Activated CD4-positive, alpha-beta T cell treated with anti-CD3 and anti-CD28 coated beads, Interleukin-2, amount 10 ng/mL, durations not matched to agents 24 days and 14 days (primary cell): ENCODE measurements at regions of chr1 and their contacts with region 1.

Region 1: DNA sequence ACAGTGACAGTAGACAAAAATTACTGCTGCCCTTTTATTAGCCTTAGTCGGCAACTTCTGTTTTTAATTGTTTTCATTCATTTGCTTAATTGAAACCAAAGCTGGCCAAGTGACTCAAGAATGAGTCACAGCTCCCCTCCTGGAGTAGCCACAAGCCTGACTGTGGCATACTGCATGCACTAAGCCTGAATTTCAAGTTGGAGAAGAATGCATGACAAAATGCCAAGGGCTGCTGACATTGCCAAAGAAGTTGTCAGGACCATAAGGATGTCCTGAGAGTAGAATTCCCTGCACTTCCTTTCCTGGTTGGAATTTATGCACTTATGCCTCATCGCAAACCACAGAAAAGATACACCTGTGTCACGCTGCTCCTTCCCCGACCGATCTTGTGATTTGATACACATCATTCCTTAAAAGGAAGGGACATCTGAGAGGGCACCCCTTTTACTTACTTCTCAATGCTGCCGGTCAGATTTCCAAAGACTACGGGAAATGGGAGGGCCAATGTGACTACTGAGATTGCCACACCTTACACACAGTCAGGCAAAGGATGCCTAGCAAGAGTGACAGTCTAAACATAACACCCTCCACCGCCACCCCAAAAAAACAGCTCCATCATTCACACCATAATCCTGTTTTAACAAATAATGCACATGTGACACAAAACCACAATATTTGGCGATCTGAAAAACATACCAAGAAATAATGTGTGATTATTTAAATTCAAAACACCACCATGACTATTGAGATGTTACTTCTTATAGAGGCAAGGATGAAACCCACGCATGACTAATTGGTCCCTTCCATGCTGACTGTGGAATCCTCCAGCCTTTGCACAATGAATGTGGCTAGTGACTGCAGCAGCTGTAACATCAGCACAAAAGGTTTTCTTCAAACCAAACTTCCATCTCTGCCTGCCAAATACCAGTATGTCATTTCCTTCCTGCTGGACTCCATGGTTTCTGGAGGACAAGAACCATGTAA is 28.2 kb downstream of the VAV3 start:
- DNase-seq: peak; percentile 68
- H3K4me3 Mint-ChIP-seq: peak overlapping the region; percentile 53
- H3K27ac Mint-ChIP-seq: peak overlapping the region; percentile 87
- H3K4me1 Mint-ChIP-seq: peaks cover 41% of the 10 kb centered on the region
- H3K27me3 Mint-ChIP-seq: no peaks in the 10 kb centered on the region

Region 2: DNA sequence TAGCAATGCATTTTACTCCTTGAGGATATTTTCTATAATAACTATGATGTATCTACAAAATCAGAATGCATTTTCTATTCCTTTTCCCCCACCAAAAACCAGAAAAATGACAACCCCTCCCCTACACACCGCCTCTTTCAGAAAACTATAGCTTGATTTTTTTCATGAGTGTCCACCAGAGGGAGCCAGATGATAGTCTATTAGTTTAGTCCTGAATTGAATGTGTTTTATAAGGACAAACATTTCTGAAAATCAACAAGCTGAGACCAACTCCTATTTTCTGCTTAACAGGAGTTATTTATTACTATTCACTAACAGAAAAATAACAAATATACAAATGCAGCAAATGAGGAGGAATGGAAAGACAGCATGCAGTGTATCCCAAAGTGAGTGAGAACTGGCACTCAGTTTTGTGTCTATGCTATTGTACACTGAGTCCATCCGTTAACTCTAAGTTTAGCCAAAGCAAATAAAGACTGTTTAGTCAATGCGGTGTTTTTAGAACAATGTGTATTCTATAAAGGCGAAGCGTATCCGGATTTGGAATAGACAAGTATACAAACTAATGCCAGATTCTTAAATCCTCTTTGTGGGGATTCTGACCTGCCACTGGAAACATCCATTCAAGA is 154.5 kb before region 1 on chr1:
- intact Hi-C with region 1: loop called (anchors 1 kb)
- DNase-seq: peak; percentile 86
- H3K4me3 Mint-ChIP-seq: no peak overlapping the region
- H3K27ac Mint-ChIP-seq: no peak overlapping the region
- H3K4me1 Mint-ChIP-seq: peaks cover 22% of the 10 kb centered on the region
- H3K27me3 Mint-ChIP-seq: no peaks in the 10 kb centered on the region

Region 3: DNA sequence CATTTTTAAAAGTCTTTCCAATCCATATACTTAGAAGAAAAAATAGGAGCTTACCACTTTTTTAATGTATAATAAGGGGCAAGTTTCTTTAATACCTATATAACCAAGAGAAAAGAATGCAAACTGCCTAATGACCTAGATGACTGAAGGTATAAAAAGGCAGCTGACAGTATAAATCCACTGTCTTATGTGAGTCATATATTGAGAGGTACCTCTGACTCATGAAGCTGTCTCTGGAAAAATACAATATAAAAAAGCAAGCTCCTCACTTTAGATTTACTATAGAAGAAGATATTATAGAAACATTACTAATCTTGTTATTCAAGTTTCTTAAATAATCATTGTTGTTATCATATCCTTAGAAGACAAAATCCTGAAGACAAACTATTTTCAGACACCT is 116.0 kb before region 1 on chr1:
- intact Hi-C with region 1: loop called (anchors 1 kb)
- DNase-seq: no peak
- H3K4me3 Mint-ChIP-seq: no peak overlapping the region
- H3K27ac Mint-ChIP-seq: peak overlapping the region; percentile 80
- H3K4me1 Mint-ChIP-seq: peaks cover 14% of the 10 kb centered on the region
- H3K27me3 Mint-ChIP-seq: no peaks in the 10 kb centered on the region

Region 4: GRCh38 chr1:107919953-107920352 is 16.8 kb before region 1 on chr1:
- intact Hi-C with region 1: loop called (anchors 1 kb)
- DNase-seq: no peak
- H3K4me3 Mint-ChIP-seq: peak overlapping the region; percentile 12
- H3K27ac Mint-ChIP-seq: peak overlapping the region; percentile 64
- H3K4me1 Mint-ChIP-seq: peaks cover 9% of the 10 kb centered on the region
- H3K27me3 Mint-ChIP-seq: no peaks in the 10 kb centered on the region

Region 5: DNA sequence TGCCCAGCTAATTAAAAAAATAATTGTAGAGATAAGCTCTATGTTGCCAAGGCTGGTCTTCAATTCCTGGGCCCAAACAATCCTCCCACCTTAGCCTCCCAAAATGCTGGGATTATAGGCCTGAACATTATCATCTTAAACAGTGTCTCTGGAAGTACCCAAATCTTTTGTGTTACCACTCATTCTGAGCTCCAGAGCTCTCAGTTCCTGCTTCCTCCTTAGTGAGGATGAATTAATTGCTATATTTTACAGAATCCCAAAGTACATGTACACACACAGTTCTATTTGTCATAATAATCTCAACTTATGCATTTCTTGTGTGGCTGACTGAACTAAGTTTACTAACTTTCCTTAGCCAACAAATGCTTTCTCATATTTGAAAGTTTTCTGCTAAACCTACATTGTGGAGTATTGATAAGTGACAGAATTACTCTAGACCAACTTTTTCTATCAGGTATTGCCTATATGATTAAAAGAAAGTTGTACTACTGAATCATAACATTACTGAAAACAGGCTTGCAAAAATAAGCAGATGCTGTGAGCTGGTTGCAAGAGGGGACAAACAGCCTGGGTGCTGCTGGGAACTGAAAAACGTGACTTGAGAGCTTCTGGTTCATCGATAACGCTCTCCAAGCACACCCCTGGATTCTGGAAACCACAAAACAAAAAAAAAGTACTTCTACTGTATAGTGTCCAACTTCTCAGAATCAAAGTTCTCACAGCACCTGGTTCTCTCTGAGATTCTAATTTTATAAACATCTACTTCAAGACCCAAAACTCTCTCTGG is 12.9 kb after region 1 on chr1:
- intact Hi-C with region 1: no loop called
- DNase-seq: peak; percentile 51
- H3K4me3 Mint-ChIP-seq: no peak overlapping the region
- H3K27ac Mint-ChIP-seq: no peak overlapping the region
- H3K4me1 Mint-ChIP-seq: peaks cover 14% of the 10 kb centered on the region
- H3K27me3 Mint-ChIP-seq: no peaks in the 10 kb centered on the region

Region 6: DNA sequence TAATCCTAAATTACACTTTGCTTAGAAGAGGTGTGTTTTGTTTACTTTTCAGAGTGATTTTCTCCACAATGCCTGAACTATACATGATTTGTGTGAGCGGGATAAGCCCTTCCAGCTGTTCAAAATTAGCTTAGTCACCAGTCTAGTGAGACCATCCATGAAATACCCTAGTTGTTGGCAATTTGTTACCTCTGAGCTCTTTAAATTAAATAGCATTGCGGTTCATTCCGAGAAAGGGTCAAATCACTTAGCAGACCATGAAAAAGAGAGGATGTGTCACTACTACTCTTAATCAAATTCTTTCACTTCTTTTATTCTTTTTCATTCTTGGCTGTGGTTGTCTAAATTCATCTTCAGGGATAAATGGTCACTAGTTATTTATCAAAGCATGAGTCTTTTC is 40.0 kb after region 1 on chr1:
- intact Hi-C with region 1: loop called (anchors 5 kb)
- DNase-seq: no peak
- H3K4me3 Mint-ChIP-seq: no peak overlapping the region
- H3K27ac Mint-ChIP-seq: no peak overlapping the region
- H3K4me1 Mint-ChIP-seq: peaks cover 4% of the 10 kb centered on the region
- H3K27me3 Mint-ChIP-seq: peaks cover 18% of the 10 kb centered on the region

Region 7: GRCh38 chr1:108079440-108080025 is 142.7 kb after region 1 on chr1:
- intact Hi-C with region 1: loop called (anchors 1 kb)
- DNase-seq: peak; percentile 82
- H3K4me3 Mint-ChIP-seq: peak overlapping the region; percentile 55
- H3K27ac Mint-ChIP-seq: peak overlapping the region; percentile 58
- H3K4me1 Mint-ChIP-seq: peaks cover 53% of the 10 kb centered on the region
- H3K27me3 Mint-ChIP-seq: no peaks in the 10 kb centered on the region